ENCODE measurements at regions of chr9 and their contacts with region 1.

Region 1: DNA sequence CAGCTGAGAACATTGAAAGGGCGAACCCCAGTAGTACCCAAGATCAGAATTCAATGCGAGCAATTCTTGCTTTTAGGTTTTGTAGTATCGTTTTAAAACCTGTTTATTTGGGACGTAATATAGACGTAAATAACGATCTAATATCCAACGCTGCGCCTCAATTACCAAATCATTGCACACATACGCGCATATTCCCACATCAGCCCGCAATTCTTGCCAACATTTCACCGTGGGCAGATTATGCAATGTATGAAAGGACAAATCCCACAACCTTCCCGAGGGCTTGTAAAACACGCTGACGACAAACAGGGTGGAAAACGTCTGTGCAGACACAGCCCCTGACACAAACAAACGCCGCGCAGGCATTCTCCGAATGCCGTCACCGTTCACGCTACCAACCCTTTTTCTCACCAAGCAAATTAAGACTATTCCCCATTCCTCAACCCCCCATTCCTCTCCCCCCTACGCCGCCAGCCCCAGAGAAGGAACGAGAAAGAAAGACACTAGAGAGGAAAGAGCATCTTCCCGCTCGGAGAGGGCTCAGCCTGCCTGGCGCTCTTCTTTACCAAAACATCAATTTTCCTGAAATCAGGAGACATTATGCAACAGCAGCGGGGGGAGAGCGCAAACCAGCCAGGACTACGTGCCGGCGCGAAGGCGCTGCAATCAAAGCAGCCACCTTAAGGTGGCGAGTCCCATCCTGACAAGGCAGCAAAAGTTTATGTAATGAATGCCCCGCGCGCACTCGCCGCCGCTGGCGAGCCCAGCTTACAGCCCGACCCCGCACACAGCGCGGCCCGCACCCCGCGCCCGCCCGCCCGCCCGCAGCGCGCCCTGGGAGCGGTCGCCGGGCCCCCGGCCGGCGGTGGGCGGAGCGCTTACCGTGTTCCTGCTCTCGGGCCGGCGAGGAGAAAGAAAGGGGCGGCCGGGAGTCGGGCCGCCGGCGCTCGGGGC is 597 bp downstream of the NFIL3 start:
- DNase-seq: peak; percentile 85
- ATAC-seq: peak; percentile 6
- H3K4me3 ChIP-seq: peak overlapping the region; percentile 71
- H3K27ac ChIP-seq: peak overlapping the region; percentile 87
- H3K4me1 ChIP-seq: peaks cover 35% of the 10 kb centered on the region
- H3K27me3 ChIP-seq: no peaks in the 10 kb centered on the region
- CTCF ChIP-seq: peak; percentile 29

Region 2: GRCh38 chr9:90964101-90965020 is 458.7 kb before region 1 on chr9:
- intact Hi-C with region 1: no loop called
- DNase-seq: peak; percentile 79
- ATAC-seq: peak; percentile 93
- H3K4me3 ChIP-seq: no peak overlapping the region
- H3K27ac ChIP-seq: no peak overlapping the region
- H3K4me1 ChIP-seq: no peaks in the 10 kb centered on the region
- H3K27me3 ChIP-seq: peaks cover 17% of the 10 kb centered on the region
- CTCF ChIP-seq: peak; percentile 20

Region 3: GRCh38 chr9:91036826-91037510 is 386.1 kb before region 1 on chr9:
- intact Hi-C with region 1: loop called (anchors 10 kb)
- DNase-seq: peak; percentile 86
- ATAC-seq: peak; percentile 97
- H3K4me3 ChIP-seq: no peak overlapping the region
- H3K27ac ChIP-seq: peak overlapping the region; percentile 60
- H3K4me1 ChIP-seq: peaks cover 21% of the 10 kb centered on the region
- H3K27me3 ChIP-seq: no peaks in the 10 kb centered on the region
- CTCF ChIP-seq: peak; percentile 68

Measured in upper lobe of right lung (tissue), 1 donor.